B cell (primary cell): ENCODE measurements at regions of chr3 and their contacts with region 1.

Region 1: DNA sequence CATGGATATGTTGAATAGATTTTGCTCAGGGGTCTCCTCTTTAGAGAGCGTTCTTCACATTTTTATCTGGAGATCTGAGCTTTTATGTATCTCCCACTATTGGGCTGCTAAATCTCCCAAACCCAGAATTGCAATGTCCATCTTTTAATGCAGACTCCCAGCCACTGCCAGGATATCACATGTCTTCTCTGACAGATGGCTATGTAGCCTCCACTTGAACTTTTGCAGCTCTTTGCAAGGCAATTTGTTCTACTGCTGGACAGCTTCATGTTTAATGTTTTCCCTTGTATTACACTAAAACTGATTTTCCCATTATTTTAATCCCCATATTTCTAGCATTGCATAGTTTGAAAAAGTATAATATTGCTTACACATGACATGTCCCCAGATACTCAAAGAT is 177.2 kb downstream of the LPP start:
- DNase-seq: no peak
- ATAC-seq: no peak
- H3K4me3 ChIP-seq: no peak overlapping the region
- H3K4me3 Mint-ChIP-seq: no peak overlapping the region
- H3K27ac ChIP-seq: no peak overlapping the region
- H3K27ac Mint-ChIP-seq: no peak overlapping the region
- H3K4me1 ChIP-seq: peaks cover 3 to 6% of the 10 kb centered on the region in 2 donors
- H3K4me1 Mint-ChIP-seq: peaks cover 27% of the 10 kb centered on the region
- H3K27me3 ChIP-seq: no peaks in the 10 kb centered on the region
- H3K27me3 Mint-ChIP-seq: no peaks in the 10 kb centered on the region
- CTCF ChIP-seq: no peak

Region 2: DNA sequence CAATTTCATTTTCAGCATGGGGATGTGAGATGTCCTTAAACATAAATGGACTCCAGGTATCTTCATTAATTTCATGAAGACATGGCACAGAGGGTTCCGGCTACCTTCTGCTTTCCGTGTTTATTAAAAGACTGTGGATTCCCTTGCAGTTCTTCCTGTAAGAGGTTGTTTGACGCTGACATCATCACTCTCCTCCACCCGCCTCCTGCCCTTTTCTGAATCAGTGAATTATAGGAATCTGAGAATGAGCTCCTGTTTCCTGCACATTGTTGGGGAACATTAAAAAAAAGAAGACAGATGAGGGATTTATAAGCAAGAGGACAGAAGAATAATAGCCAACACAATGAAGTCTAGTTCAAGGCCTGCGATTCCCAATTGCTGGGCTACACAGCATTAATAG is 14.1 kb after region 1 on chr3:
- CTCF ChIA-PET with region 1: interaction called, 3 read pairs
- POLR2A ChIA-PET with region 1: no interaction called
- intact Hi-C with region 1: loop called (anchors 2 kb)
- DNase-seq: no peak
- ATAC-seq: no peak
- H3K4me3 ChIP-seq: no peak overlapping the region
- H3K4me3 Mint-ChIP-seq: no peak overlapping the region
- H3K27ac ChIP-seq: no peak overlapping the region
- H3K27ac Mint-ChIP-seq: no peak overlapping the region
- H3K4me1 ChIP-seq: peaks cover 9 to 10% of the 10 kb centered on the region in 2 donors
- H3K4me1 Mint-ChIP-seq: peaks cover 31% of the 10 kb centered on the region
- H3K27me3 ChIP-seq: no peaks in the 10 kb centered on the region
- H3K27me3 Mint-ChIP-seq: no peaks in the 10 kb centered on the region
- CTCF ChIP-seq: no peak

Region 3: GRCh38 chr3:188720636-188721035 is 389.5 kb after region 1 on chr3:
- CTCF ChIA-PET with region 1: no interaction called
- POLR2A ChIA-PET with region 1: no interaction called
- intact Hi-C with region 1: no loop called
- DNase-seq: no peak
- ATAC-seq: no peak
- H3K4me3 ChIP-seq: no peak overlapping the region
- H3K4me3 Mint-ChIP-seq: no peak overlapping the region
- H3K27ac ChIP-seq: no peak overlapping the region
- H3K27ac Mint-ChIP-seq: no peak overlapping the region
- H3K4me1 ChIP-seq: no peaks in the 10 kb centered on the region
- H3K4me1 Mint-ChIP-seq: no peaks in the 10 kb centered on the region
- H3K27me3 ChIP-seq: no peaks in the 10 kb centered on the region
- H3K27me3 Mint-ChIP-seq: no peaks in the 10 kb centered on the region
- CTCF ChIP-seq: no peak